ENCODE measurements at regions of chr14 and their contacts with region 1.

Region 1: GRCh38 chr14:77028384-77029231 is at the start of gene IRF2BPL:
- DNase-seq: peak; percentile 96
- H3K27ac ChIP-seq: peak within 1 kb of the TSS; percentile 99
- CTCF ChIP-seq: no peak

Region 2: GRCh38 chr14:77067632-77068514 is 39.3 kb after region 1 on chr14:
- CTCF ChIA-PET with region 1: interaction called, 20 read pairs
- POLR2A ChIA-PET with region 1: interaction called, 3 read pairs
- DNase-seq: peak; percentile 80
- H3K27ac ChIP-seq: peak overlapping the region; percentile 57
- CTCF ChIP-seq: peak; percentile 91